ENCODE measurements at regions of chr11 and their contacts with region 1.

Region 1: DNA sequence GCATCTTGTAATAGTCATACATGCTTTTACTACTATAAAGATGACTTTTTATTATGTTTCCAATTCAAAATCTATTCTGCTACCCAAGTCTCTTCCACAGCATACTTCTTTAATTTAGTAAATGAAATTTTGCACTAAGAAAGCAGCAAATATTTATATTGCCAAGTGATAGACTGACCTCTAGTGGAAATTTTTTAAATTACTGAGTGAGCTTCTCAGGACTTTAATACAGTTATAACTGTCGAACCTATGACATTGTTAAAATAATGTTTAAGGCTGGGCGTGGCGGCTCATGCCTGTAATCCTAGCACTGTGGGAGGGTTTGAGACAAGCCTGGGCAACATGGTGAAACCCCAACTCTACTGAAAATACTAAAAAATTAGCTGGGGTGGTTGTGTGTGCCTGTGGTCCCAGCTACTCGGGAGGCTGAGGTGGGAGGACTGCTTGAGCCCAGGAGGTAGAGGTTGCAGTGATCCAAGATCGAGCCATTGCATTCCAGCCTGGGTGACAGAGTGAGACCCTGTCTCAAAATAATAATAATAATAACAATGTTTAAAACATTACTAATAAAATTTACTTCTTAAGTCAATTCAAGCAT is 27.3 kb downstream of the STK33 start:
- DNase-seq: peak; percentile 25
- CTCF ChIP-seq: peak; percentile 58

Region 2: DNA sequence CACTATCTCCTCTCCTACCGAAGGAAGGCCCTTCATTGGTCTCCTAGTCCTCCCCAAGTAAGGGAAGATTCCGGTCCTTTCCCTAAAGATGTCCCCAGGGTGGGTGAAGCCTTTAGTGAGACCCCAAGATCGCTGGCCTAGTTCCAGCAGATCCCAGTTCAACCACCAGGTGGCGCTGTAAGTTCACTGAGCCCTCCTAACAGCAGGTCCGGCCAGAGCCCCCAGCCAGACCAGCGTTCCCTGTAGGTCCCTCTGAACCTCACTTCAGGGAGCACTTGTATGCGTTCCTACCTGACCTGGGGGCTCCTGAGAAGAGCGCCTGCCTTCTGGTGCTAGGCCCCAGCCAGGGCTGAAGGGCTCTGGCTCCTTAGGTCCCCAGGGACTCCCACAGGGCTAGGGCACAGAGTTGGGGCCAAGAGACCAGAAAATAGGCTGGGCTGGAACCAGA is 341.1 kb before region 1 on chr11:
- in situ Hi-C with region 1: loop called (anchors 10 kb)
- DNase-seq: peak; percentile 92
- CTCF ChIP-seq: peak; percentile 87

Region 3: DNA sequence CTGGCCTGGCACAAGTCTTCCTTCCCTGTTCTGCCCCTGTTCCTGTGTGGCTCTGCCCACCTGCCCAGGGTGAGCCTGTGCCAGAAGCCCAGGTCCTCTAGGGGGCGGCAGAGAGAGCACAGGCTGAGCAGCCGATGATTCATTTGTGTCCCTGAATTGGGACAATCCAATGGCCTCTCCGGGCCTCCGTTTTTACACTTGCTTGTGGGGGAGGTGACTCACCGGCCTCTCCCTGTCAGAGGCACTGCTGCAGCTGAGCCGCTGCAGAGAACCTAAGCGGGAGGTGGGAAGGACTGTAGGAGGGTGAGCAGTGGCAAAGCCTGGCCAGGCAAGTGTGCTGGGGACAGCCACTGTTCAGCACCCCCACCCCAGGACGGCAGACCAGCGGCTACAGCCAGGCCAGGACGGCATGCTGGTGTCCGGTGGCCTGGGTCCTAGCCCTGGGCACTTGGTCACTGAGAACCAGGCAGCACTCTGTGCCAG is 237.8 kb before region 1 on chr11:
- in situ Hi-C with region 1: loop called (anchors 25 kb)
- DNase-seq: peak; percentile 88
- CTCF ChIP-seq: peak; percentile 90

Region 4: GRCh38 chr11:8477680-8478079 is 89.0 kb before region 1 on chr11:
- in situ Hi-C with region 1: no loop called
- DNase-seq: peak; percentile 32
- CTCF ChIP-seq: no peak

Region 5: GRCh38 chr11:8768625-8769333 is 202.1 kb after region 1 on chr11:
- in situ Hi-C with region 1: no loop called
- DNase-seq: no peak
- CTCF ChIP-seq: no peak